ENCODE measurements at regions of chr12 and their contacts with region 1.

Region 1: GRCh38 chr12:120710031-120710804 is at the start of gene UNC119B:
- DNase-seq: peak; percentile 94
- H3K4me3 Mint-ChIP-seq: peak within 1 kb of the TSS; percentile 84
- H3K27ac Mint-ChIP-seq: peak within 1 kb of the TSS; percentile 76
- H3K4me1 Mint-ChIP-seq: peaks cover 23% of the 10 kb centered on the region
- H3K27me3 Mint-ChIP-seq: no peaks in the 10 kb centered on the region
- total RNA-seq, gene UNC119B: 25.5 and 26.2 TPM in 2 replicates

Region 2: GRCh38 chr12:120649442-120650232 is 60.6 kb before region 1 on chr12:
- intact Hi-C with region 1: loop called (anchors 1 kb)
- DNase-seq: no peak
- H3K4me3 Mint-ChIP-seq: peak overlapping the region; percentile 62
- H3K27ac Mint-ChIP-seq: no peak overlapping the region
- H3K4me1 Mint-ChIP-seq: peaks cover 12% of the 10 kb centered on the region
- H3K27me3 Mint-ChIP-seq: peaks cover 53% of the 10 kb centered on the region

Region 3: GRCh38 chr12:120677765-120678473 is 32.3 kb before region 1 on chr12:
- intact Hi-C with region 1: loop called (anchors 5 kb)
- DNase-seq: peak; percentile 70
- H3K4me3 Mint-ChIP-seq: no peak overlapping the region
- H3K27ac Mint-ChIP-seq: peak overlapping the region; percentile 66
- H3K4me1 Mint-ChIP-seq: peaks cover 17% of the 10 kb centered on the region
- H3K27me3 Mint-ChIP-seq: peaks cover 4% of the 10 kb centered on the region

Region 4: DNA sequence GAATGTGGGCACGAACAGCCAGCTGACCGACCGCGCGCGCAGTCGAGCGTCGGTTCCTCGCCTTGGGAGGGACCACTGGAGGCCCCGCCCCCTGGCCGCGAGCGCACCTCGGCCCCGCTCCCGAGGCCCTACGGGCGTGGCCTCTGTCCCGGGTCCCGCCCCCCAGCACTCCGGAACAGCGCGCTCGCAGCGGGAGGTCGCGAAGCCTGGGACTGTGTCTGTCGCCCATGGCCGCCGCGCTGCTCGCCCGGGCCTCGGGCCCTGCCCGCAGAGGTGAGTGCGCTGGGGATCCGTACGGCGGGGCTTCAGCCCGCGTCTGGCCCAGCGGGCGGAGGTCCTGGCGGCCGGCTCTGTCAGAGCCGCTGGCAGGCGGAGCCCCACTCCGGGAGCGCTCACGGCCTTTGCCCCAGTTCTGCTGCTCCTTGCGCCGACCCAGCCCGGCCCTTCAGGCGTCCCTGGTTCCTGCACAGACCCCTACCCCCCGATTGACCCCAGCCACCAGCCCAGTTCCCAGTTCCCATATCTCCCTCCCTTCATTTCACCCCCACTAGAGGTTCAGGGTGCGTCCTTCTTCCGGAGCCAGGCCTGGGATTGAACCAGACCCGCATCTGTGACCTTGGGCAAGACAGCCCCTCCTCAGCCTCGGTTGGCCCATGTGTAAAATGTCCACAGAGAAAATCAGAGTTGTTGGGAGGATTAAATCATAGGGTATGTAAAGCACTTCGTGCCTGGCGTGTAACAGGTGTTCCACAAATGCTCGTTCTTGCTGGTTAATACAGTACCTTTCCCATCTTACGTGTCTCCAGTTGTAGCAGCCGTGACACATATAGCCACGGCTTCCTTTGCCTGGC is 15.7 kb after region 1 on chr12 and contains the start of gene ACADS:
- intact Hi-C with region 1: loop called (anchors 2 kb)
- DNase-seq: peak; percentile 98
- H3K4me3 Mint-ChIP-seq: peak within 1 kb of the TSS; percentile 97
- H3K27ac Mint-ChIP-seq: peak within 1 kb of the TSS; percentile 88
- H3K4me1 Mint-ChIP-seq: peaks cover 18% of the 10 kb centered on the region
- H3K27me3 Mint-ChIP-seq: no peaks in the 10 kb centered on the region
- total RNA-seq, gene ACADS: 11.7 and 12.8 TPM in 2 replicates

Measured in activated CD4-positive, alpha-beta T cell treated with anti-CD3 and anti-CD28 coated beads, Interleukin-2, amount 10 ng/mL, durations not matched to agents 24 days and 14 days (primary cell).